ENCODE measurements at regions of chrX and their contacts with region 1.

Region 1: DNA sequence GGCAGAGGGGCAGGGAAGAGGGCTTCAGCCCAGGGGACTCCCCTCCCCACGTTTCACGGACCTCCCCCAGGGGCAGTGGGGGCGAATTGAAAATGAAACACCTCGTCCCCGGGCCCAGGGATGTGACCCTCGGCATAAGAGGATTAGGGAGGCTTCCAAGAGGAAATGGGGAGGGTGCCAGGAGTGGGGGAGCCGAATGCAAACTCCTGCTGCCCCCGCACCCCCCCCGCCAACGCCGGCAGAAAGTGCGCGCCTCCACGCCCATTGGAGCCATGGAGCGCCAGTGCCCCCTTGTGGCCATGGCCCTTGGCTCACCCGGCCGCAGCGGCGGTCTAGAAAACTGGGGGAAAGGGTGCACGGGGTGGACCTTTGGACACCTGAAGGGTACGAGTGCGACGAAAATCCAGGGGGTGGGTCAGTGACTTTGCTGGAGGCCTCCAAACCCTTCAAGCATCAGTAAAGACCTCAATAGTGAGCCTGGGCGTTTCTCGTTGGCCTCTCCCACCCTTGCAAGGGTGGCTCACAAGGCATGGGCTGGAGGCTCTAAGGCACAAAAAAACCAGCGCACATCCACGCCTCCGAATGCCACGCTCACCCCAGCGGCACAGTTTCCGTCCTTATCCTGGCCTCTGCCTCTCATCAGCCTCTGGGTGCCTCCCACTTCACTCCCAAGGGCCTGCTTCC is 120.8 kb upstream of the PJA1 start:
- DNase-seq: peak; percentile 91
- H3K4me3 ChIP-seq: peak overlapping the region; percentile 39
- H3K27ac ChIP-seq: peak overlapping the region; percentile 80
- H3K4me1 ChIP-seq: peaks cover 75% of the 10 kb centered on the region
- H3K27me3 ChIP-seq: no peaks in the 10 kb centered on the region
- CTCF ChIP-seq: peak; percentile 97

Region 2: DNA sequence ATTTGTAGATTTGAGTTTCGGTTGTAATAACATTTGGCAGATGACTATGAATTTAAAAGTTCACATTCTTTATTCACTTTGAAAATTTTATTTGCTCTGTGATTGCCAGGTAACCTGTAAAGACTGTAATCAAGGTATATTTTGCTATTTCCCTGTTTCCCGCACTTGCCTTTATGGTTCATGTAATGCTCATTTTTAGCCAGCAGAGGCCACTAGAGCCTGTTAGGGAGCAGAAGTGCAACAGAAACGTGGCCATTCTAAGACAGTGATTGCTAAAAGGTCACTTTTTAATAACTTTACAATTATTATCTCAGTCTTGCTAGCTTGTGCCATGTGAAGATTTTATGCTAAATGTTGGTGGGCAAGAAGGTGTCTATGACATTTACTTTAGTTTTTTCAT is 774.8 kb before region 1 on chrX:
- CTCF ChIA-PET with region 1: no interaction called
- POLR2A ChIA-PET with region 1: no interaction called
- intact Hi-C with region 1: loop called (anchors 1 kb)
- DNase-seq: peak; percentile 61
- H3K4me3 ChIP-seq: no peak overlapping the region
- H3K27ac ChIP-seq: no peak overlapping the region
- H3K4me1 ChIP-seq: no peaks in the 10 kb centered on the region
- H3K27me3 ChIP-seq: no peaks in the 10 kb centered on the region
- CTCF ChIP-seq: peak; percentile 83

Region 3: GRCh38 chrX:68828740-68829552 is 457.1 kb before region 1 on chrX and contains the start of gene EFNB1:
- CTCF ChIA-PET with region 1: interaction called, 12 read pairs
- POLR2A ChIA-PET with region 1: interaction called, 3 read pairs
- intact Hi-C with region 1: loop called (anchors 1 kb)
- DNase-seq: peak; percentile 95
- H3K4me3 ChIP-seq: peak within 1 kb of the TSS; percentile 82
- H3K27ac ChIP-seq: peak within 1 kb of the TSS; percentile 84
- H3K4me1 ChIP-seq: no peaks in the 10 kb centered on the region
- H3K27me3 ChIP-seq: no peaks in the 10 kb centered on the region
- CTCF ChIP-seq: no peak
- total RNA-seq, gene EFNB1: 76.8 and 78.1 TPM in 2 replicates

Region 4: DNA sequence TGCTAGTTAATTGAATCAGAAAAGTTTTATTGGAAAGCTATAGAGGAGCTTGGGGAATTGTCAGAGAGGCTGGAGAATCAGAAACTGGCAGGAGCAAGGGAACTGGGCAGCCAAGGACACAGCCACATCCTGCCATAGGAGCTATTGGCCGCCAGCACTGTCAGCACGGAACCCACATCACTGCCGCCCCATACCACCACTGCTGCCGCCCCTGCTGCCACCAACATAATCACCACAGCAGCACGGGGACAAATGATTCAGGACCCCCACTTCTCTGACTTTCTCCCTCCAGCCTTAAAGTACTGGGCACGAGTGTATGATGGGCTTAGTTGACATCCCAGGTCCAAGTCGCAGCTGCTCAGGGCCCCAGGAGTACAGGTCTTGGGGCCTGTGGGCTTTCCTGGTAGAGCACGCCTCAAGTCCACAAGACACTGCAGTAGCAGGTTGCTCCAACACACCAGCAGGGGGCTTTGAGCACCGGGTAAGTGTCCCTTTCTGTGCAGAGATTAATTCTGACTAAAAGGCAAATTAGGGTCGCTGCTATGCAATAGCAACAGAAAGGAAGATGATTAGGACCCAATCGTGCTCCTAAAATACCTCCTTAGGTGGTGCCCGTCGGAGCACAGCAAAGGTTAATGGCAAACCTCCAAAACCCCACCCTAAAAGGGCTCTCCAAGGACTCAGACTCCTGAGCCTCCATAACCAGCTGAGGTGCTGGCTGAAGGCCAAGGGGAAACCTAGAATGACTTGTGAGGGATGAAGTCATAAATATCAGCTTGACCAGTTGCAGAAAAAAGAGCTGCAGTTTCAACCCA is 127.7 kb before region 1 on chrX:
- CTCF ChIA-PET with region 1: no interaction called
- POLR2A ChIA-PET with region 1: no interaction called
- intact Hi-C with region 1: loop called (anchors 10 kb)
- DNase-seq: peak; percentile 71
- H3K4me3 ChIP-seq: no peak overlapping the region
- H3K27ac ChIP-seq: no peak overlapping the region
- H3K4me1 ChIP-seq: no peaks in the 10 kb centered on the region
- H3K27me3 ChIP-seq: no peaks in the 10 kb centered on the region
- CTCF ChIP-seq: peak; percentile 59

Region 5: GRCh38 chrX:69215161-69215875 is 70.7 kb before region 1 on chrX:
- CTCF ChIA-PET with region 1: no interaction called
- POLR2A ChIA-PET with region 1: no interaction called
- intact Hi-C with region 1: no loop called
- DNase-seq: no peak
- H3K4me3 ChIP-seq: no peak overlapping the region
- H3K27ac ChIP-seq: no peak overlapping the region
- H3K4me1 ChIP-seq: no peaks in the 10 kb centered on the region
- H3K27me3 ChIP-seq: no peaks in the 10 kb centered on the region
- CTCF ChIP-seq: no peak

Region 6: DNA sequence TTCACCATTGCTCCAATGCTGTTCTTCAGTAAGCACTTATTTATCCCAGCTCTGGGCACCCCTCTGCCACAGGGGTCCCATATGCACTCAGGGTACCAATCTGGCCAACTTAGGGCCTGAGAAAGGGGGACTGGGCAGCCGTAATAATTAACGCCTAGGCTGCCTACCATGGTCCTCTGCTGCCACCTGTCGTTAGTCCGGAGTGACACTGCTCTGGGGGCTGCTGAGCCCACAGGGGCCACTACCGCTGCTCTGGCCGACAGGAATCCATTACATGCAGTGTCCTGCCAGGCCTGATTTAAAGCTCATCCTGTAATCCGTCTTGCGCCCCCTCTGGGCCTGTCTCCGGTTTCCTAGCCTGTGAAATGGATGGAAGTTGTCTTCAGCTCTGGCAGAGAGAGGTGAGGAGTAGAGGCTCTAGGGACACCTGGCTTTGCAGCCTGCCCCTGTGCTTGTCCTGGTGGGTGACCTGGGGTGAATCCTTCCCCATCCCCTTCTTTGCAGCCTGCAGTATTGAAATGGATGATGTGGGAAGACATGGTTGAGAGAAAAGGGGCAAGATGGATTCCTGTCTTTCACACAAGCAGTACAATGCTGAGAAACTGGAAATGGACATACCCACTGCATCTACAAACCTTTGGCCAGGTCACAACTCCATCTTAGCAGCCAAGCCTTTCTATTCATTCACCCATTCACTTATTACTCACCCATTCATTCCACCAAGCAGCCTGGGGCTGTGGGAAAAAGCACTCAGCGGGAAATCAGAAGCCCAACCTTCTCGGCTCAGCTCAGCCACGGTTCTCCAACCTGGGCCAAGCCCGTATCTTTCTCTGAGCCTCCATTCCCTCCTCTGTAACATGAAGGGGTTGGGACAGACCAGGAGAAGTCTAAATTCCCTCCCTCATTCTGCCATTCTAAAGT is 101.8 kb after region 1 on chrX:
- CTCF ChIA-PET with region 1: interaction called, 9 read pairs
- POLR2A ChIA-PET with region 1: no interaction called
- intact Hi-C with region 1: loop called (anchors 2 kb)
- DNase-seq: peak; percentile 84
- H3K4me3 ChIP-seq: no peak overlapping the region
- H3K27ac ChIP-seq: peak overlapping the region; percentile 86
- H3K4me1 ChIP-seq: peaks cover 52% of the 10 kb centered on the region
- H3K27me3 ChIP-seq: no peaks in the 10 kb centered on the region
- CTCF ChIP-seq: peak; percentile 94

Region 7: GRCh38 chrX:69603566-69604194 is 317.7 kb after region 1 on chrX:
- CTCF ChIA-PET with region 1: no interaction called
- POLR2A ChIA-PET with region 1: no interaction called
- intact Hi-C with region 1: no loop called
- DNase-seq: no peak
- H3K4me3 ChIP-seq: no peak overlapping the region
- H3K27ac ChIP-seq: no peak overlapping the region
- H3K4me1 ChIP-seq: no peaks in the 10 kb centered on the region
- H3K27me3 ChIP-seq: peaks cover 8% of the 10 kb centered on the region
- CTCF ChIP-seq: no peak

Measured in A673 (cell line).